ENCODE measurements at regions of chr6 and their contacts with region 1.

Region 1: GRCh38 chr6:15691250-15691869 is 28.5 kb upstream of the DTNBP1 start:
- DNase-seq: peak; percentile 86 to 89
- H3K4me3 ChIP-seq: no peak overlapping the region
- H3K4me1 ChIP-seq: no peaks in the 10 kb centered on the region
- H3K27me3 ChIP-seq: no peaks in the 10 kb centered on the region

Region 2: DNA sequence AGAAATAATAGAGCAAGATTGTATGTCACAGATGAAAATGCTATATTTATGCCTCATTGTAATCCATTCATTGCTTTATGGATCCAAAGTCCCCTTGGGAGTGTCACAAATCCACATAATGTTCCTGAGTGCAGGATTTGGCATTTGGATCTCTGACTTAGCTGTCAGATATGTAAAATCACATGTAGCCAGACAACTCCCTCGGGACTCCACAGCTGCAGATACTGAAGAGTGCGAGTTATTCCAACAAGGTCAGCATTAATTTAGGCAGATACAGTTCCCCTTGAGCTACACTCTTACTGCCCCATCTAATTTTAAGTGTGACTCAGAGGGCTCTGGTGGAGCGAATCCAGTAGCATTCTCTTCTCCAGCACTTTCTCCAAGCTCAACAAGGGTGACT is 1140.5 kb before region 1 on chr6:
- in situ Hi-C with region 1: no loop called
- DNase-seq: no peak
- H3K4me3 ChIP-seq: no peak overlapping the region
- H3K4me1 ChIP-seq: no peaks in the 10 kb centered on the region
- H3K27me3 ChIP-seq: no peaks in the 10 kb centered on the region

Region 3: DNA sequence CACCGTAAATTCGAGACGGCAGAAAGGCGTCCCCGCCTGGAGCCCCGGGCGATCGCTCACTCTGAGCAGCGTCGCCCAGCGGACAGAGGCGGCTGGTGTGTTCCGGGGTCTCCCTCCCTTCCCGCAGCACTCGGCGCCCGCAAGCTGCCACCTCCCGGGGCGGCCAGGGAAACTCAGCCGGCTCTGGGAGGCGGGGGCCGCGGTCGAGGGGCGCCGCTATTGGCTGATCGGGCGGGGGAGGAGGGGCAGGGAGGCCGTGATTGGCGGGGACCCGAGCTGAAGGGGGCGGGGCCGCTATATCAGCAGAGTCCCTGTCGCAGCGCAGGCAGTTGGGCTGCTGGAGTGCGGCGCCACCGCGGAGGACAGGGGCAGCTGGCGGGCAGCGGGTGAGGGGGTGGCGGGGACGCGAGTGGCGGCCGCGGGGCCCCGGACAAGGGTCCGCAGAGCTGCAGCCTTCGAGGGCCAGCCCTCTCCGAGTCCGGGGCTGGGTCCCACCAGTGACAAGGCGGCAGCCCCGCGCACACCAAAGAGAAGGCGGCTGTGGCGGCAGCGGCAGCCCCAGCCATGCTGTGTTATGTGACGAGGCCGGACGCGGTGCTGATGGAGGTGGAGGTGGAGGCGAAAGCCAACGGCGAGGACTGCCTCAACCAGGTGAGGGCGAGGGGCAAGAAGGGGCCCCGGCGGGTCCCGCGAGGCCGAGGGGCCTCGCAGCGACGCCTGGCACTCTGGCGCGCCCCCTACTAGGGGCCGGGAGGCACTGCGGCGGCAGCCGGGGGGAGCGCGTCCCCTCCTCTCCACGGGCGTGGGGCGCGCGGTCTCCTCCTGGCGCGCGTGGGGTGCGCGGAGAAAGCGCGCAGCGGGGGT is 437.6 kb after region 1 on chr6 and contains the start of gene MYLIP:
- in situ Hi-C with region 1: loop called (anchors 5 kb)
- DNase-seq: peak; percentile 94 to 98
- H3K4me3 ChIP-seq: peak within 1 kb of the TSS; percentile 99
- H3K4me1 ChIP-seq: peaks cover 25% of the 10 kb centered on the region
- H3K27me3 ChIP-seq: no peaks in the 10 kb centered on the region

Region 4: GRCh38 chr6:16206595-16207037 is 515.3 kb after region 1 on chr6:
- in situ Hi-C with region 1: loop called (anchors 10 kb)
- DNase-seq: peak; percentile 63 to 66
- H3K4me3 ChIP-seq: no peak overlapping the region
- H3K4me1 ChIP-seq: no peaks in the 10 kb centered on the region
- H3K27me3 ChIP-seq: no peaks in the 10 kb centered on the region; the same call in 1 of the 2 replicates